ENCODE measurements at regions of chr6 and their contacts with region 1.

Region 1: GRCh38 chr6:89352278-89353117 is at the start of gene UBE2J1:
- DNase-seq: peak; percentile 71
- H3K4me3 Mint-ChIP-seq: peak within 1 kb of the TSS; percentile 90
- H3K27ac Mint-ChIP-seq: peak within 1 kb of the TSS; percentile 84
- H3K4me1 Mint-ChIP-seq: peaks cover 66% of the 10 kb centered on the region
- H3K27me3 Mint-ChIP-seq: no peaks in the 10 kb centered on the region
- total RNA-seq, gene UBE2J1: 10.8 to 10.9 TPM

Region 2: GRCh38 chr6:88963139-88964090 is 389.1 kb before region 1 on chr6 and contains the start of gene RNGTT:
- CTCF ChIA-PET with region 1: no interaction called
- intact Hi-C with region 1: loop called (anchors 2 kb)
- DNase-seq: peak; percentile 99
- H3K4me3 Mint-ChIP-seq: peak within 1 kb of the TSS; percentile 99
- H3K27ac Mint-ChIP-seq: peak within 1 kb of the TSS; percentile 87
- H3K4me1 Mint-ChIP-seq: peaks cover 34% of the 10 kb centered on the region
- H3K27me3 Mint-ChIP-seq: no peaks in the 10 kb centered on the region
- total RNA-seq, gene RNGTT: 21.7 to 23.5 TPM

Region 3: DNA sequence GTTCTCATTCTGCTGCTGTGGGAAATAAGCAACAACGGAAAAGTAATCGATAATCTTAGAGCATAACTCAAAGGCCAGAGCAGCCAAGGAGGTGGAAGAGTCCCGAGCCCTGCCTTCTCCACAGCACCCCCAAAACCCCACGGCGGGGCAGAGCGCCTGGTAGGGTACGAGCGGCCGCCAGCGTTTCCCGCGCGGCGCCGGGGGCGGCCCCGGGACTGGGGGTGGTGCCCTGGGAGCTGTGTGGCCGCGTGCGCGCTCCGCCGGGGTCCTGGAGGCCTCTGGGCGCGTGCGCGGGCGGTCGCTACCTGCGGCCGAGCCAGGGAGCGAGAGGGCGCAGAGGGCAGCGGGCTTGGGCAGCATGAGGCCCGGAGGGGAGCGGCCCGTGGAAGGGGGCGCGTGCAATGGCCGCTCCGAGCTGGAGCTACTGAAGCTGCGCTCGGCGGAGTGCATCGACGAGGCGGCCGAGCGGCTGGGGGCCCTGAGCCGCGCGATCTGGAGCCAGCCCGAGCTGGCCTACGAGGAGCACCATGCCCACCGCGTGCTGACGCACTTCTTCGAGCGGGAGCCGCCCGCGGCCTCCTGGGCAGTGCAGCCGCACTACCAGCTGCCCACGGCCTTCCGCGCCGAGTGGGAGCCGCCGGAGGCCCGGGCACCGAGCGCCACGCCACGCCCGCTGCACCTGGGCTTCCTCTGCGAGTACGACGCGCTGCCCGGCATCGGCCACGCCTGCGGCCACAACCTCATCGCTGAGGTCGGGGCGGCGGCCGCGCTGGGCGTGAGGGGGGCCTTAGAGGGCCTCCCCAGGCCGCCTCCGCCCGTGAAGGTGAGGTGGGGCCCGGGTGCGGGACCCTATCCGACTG is 206.5 kb before region 1 on chr6 and contains the start of gene PM20D2:
- CTCF ChIA-PET with region 1: interaction called, 4 read pairs
- intact Hi-C with region 1: loop called (anchors 2 kb)
- DNase-seq: peak; percentile 59
- H3K4me3 Mint-ChIP-seq: peak within 1 kb of the TSS; percentile 90
- H3K27ac Mint-ChIP-seq: peak within 1 kb of the TSS; percentile 96
- H3K4me1 Mint-ChIP-seq: peaks cover 27% of the 10 kb centered on the region
- H3K27me3 Mint-ChIP-seq: no peaks in the 10 kb centered on the region
- total RNA-seq, gene PM20D2: 11.6 to 12.7 TPM

Region 4: GRCh38 chr6:89297695-89298351 is 54.7 kb before region 1 on chr6:
- CTCF ChIA-PET with region 1: interaction called, 4 read pairs
- intact Hi-C with region 1: loop called (anchors 1 kb)
- DNase-seq: peak; percentile 83
- H3K4me3 Mint-ChIP-seq: peak overlapping the region; percentile 7
- H3K27ac Mint-ChIP-seq: peak overlapping the region; percentile 46
- H3K4me1 Mint-ChIP-seq: peaks cover 18% of the 10 kb centered on the region
- H3K27me3 Mint-ChIP-seq: no peaks in the 10 kb centered on the region

Region 5: GRCh38 chr6:89412071-89413005 is 59.8 kb after region 1 on chr6 and contains the start of gene RRAGD:
- CTCF ChIA-PET with region 1: interaction called, 6 read pairs
- intact Hi-C with region 1: loop called (anchors 1 kb)
- DNase-seq: peak; percentile 67
- H3K4me3 Mint-ChIP-seq: peak within 1 kb of the TSS; percentile 91
- H3K27ac Mint-ChIP-seq: peak within 1 kb of the TSS; percentile 31
- H3K4me1 Mint-ChIP-seq: peaks cover 23% of the 10 kb centered on the region
- H3K27me3 Mint-ChIP-seq: peaks cover 4% of the 10 kb centered on the region
- total RNA-seq, gene RRAGD: 11.3 to 13.2 TPM

Region 6: DNA sequence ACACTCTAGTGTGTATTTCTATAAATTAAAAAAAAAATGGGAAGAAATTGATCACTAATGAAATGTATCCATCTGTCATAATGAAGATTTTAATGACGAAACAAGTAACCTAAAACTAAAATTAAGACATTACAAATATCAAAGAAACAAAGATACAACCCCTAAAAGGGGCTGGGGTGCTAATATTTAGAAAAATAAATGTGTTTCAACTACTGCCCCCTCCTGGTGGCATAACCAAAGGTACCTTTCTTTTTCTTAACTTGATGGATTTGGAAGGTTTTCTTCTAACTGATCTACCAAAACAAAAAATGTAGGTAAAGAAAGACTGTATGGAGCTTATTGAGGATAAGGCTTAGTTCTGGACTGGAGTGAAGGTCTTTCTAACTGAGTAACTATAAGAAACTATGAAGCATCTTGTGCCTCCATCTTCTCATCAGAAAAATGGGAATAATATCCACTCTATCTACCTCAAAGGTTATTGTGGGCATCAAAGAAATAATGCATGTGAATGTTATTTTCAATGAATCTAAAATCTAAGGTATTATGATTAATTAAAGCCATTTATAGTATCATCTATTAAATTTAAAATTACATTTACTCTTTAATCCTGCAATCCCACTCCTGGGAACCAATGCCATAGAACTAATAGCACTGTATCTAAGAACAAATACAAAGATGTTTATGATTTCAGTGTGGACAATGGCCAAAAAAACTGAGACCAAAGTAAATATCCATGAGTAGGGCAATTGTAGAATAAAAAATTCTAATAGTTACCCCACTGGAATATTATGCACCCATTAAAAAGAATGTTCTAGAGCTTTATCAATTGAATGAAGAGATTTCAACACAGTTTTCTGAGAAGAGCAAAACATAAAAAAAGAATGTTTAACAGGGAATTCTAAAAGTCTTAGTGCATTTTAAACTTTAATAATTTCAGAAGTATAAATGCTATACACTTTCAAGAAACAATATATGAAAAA is 827.0 kb after region 1 on chr6:
- CTCF ChIA-PET with region 1: no interaction called
- intact Hi-C with region 1: loop called (anchors 10 kb)
- DNase-seq: peak; percentile 56
- H3K4me3 Mint-ChIP-seq: no peak overlapping the region
- H3K27ac Mint-ChIP-seq: peak overlapping the region; percentile 85
- H3K4me1 Mint-ChIP-seq: peaks cover 81% of the 10 kb centered on the region
- H3K27me3 Mint-ChIP-seq: no peaks in the 10 kb centered on the region

Measured in activated naive CD4-positive, alpha-beta T cell treated with anti-CD3 and anti-CD28 coated beads for 36 hours (primary cell).